PC-9 (cell line): ENCODE measurements at regions of chr2 and their contacts with region 1.

Region 1: DNA sequence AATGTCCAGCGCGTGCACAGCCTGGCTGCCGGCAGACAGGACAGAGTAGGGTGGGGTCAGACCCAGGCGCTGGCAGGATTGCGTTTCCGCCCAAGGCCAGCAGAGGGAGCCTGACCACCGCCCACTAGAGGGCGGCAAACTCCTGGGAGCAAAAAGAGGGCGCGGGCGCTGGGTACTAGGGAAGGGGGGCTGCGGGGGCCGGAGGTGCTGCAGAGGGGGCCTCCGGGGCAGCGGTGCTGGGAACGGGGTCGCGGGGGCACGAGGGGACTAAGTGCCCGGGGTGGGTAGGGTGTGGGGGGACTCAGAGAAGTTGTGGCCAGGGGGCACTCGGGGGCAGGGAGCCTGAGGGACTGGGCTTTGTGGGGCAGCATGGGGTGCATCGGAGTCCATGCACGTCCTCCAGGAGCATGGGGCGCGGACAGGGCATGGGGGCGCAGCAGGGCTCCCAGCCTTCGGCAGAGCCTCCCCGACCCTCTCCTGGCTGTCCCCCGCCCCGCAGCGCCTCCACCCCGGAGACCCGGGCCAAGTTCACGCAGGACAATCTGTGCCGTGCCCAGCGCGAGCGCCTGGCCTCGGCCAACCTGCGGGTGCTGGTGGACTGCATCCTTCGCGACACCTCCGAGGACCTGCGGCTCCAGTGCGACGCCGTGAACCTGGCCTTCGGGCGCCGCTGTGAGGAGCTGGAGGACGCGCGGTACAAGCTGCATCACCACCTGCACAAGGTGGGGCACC is 3.2 kb downstream of the TEKT4 start:
- DNase-seq: peak in 1 of 2 experiments; percentile 83
- H3K4me3 ChIP-seq: no peak overlapping the region
- H3K27ac ChIP-seq: no peak overlapping the region
- H3K4me1 ChIP-seq: peaks cover 6% of the 10 kb centered on the region; the same call in 1 of the 2 replicates
- H3K27me3 ChIP-seq: no peaks in the 10 kb centered on the region
- CTCF ChIP-seq: peak; percentile 98

Region 2: GRCh38 chr2:94956797-94957391 is 82.5 kb after region 1 on chr2:
- CTCF ChIA-PET with region 1: no interaction called
- POLR2A ChIA-PET with region 1: no interaction called
- intact Hi-C with region 1: loop called (anchors 5 kb)
- DNase-seq: peak in 1 of 2 experiments; percentile 45
- H3K4me3 ChIP-seq: no peak overlapping the region
- H3K27ac ChIP-seq: no peak overlapping the region
- H3K4me1 ChIP-seq: peaks cover 15% of the 10 kb centered on the region
- H3K27me3 ChIP-seq: peaks cover 22% of the 10 kb centered on the region; the same call in 1 of the 2 replicates
- CTCF ChIP-seq: peak; percentile 99

Region 3: DNA sequence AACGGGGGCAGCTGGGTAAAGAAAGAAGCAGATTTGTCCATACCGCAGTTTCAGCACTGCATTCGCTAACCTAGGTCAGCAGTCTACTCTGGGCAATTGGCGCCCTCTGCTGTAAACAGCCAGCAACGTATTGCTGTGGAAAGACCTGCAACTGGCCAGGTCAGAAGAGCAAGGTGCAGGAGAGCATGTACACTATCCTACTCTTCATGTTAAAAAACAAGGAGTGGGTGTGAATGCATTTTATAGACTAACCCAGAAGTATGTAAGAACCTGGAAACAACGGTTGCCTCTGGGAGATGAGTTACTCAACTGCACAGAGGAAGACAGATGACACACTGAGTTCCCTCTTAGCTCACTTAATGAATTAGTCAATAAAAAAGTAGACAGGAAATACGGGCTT is 241.0 kb after region 1 on chr2:
- CTCF ChIA-PET with region 1: no interaction called
- POLR2A ChIA-PET with region 1: no interaction called
- intact Hi-C with region 1: loop called (anchors 1 kb)
- DNase-seq: peak; percentile 69 to 77
- H3K4me3 ChIP-seq: no peak overlapping the region
- H3K27ac ChIP-seq: no peak overlapping the region
- H3K4me1 ChIP-seq: peaks cover 10% of the 10 kb centered on the region; the same call in 1 of the 2 replicates
- H3K27me3 ChIP-seq: no peaks in the 10 kb centered on the region
- CTCF ChIP-seq: peak; percentile 94

Region 4: GRCh38 chr2:95207111-95207961 is 332.9 kb after region 1 on chr2 and contains the start of gene ZNF892:
- CTCF ChIA-PET with region 1: no interaction called
- POLR2A ChIA-PET with region 1: no interaction called
- intact Hi-C with region 1: loop called (anchors 10 kb)
- DNase-seq: peak; percentile 86 to 94
- H3K4me3 ChIP-seq: peak within 1 kb of the TSS; percentile 63
- H3K27ac ChIP-seq: no peak within 1 kb of the TSS
- H3K4me1 ChIP-seq: peaks cover 6% of the 10 kb centered on the region; the same call in 1 of the 2 replicates
- H3K27me3 ChIP-seq: no peaks in the 10 kb centered on the region
- CTCF ChIP-seq: peak; percentile 59
- total RNA-seq, gene ZNF892: 2.8 and 3.1 TPM in 2 replicates